ENCODE measurements at regions of chr6 and their contacts with region 1.

Region 1: GRCh38 chr6:2103644-2104523 is 141.5 kb downstream of the GMDS start:
- DNase-seq: peak in 2 of 42 donors; percentile 5 to 37

Region 2: GRCh38 chr6:1609648-1610496 is 494.0 kb before region 1 on chr6 and contains the start of gene FOXC1:
- intact Hi-C with region 1: loop called (anchors 5 kb)
- DNase-seq: peak in 29 of 42 donors; percentile 19 to 71 (median 41)

Region 3: DNA sequence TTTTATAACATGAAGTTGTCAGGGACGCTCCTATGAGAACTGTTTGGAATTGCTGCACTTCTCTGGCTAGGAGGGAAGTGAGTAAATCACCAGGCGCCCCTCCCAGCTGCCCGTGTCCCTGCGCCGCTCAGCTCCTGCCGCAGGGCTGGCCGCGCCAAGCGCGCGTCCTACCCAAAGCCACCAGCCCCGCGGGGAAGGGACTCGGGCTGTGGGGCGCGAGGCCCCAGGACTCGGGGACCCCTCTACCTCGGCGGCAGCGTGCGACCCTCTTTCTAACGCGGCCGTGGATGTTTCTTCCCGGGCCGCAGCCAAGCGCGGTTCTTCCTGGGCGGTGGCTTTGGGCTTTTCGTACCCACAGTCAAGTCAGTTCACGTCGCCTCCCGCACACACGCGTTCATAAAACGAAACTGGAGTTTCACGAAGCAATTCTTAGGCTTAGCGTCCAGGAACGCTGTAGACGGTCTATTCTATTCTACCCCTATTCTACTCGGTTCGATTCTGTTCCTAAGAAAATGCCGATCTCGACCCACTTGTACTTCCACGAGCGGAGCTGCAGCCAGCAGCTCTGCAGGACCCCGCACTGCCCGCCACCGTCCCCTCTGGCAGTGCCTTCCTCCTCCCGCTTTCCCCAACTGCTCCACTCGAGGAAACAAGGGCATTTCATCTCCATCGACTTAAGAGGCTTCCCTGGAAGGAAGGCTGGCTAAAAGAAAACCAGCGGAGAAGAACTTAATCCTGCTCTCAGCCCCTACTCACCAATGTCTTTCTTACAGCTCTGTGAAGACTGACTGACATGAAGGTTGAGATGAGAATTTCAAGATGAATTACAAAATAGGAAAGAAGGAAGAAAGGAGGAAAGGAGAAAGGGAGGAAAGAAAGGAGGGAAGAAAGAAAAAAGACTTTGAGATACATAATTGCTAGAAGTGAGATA is 478.8 kb before region 1 on chr6:
- intact Hi-C with region 1: loop called (anchors 5 kb)
- DNase-seq: peak in 1 of 42 donors; percentile 26

Region 4: DNA sequence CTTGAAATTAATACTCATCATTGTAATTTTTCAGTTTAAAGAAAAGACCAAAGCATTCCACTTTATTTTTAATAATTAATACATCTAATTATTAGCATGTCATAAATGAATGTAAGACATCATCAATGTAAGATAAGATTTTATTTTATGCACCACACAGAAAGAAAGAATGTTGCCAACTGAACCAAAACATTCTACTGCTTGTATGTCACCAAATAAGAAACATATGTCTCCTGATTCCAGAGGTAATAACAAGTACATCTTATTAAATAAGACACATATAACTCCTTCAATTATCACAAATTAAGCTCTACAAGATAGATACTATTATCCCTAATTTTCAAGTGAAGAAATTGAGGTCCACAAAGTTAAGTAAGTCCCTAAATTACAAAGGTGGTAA is 48.0 kb before region 1 on chr6:
- intact Hi-C with region 1: no loop called
- DNase-seq: no peak

Region 5: GRCh38 chr6:2245094-2245876 is 141.4 kb after region 1 on chr6 and contains the start of gene GMDS:
- intact Hi-C with region 1: no loop called
- DNase-seq: peak; percentile 52 to 93 (median 86)

Region 6: GRCh38 chr6:2369606-2370215 is 265.8 kb after region 1 on chr6:
- intact Hi-C with region 1: no loop called
- DNase-seq: no peak